Activated T-helper 1 cell treated with anti-CD3 and anti-CD28 coated beads, Interleukin-12 subunit alpha, Interleukin-12 subunit beta, Interleukin-2, Interleukin-4 antibody, amounts not matched to agents 30 ng/mL and 10 ng/mL and 1 ng/mL, durations not matched to agents 14 hours and 24 hours and 36 hours (primary cell): ENCODE measurements at regions of chr2 and their contacts with region 1.

Region 1: GRCh38 chr2:178414266-178415247 is 36.4 kb downstream of the PRKRA start:
- DNase-seq: peak; percentile 76
- H3K4me3 Mint-ChIP-seq: peak overlapping the region; percentile 87
- H3K27ac Mint-ChIP-seq: peak overlapping the region; percentile 97
- H3K4me1 Mint-ChIP-seq: peaks cover 70% of the 10 kb centered on the region
- H3K27me3 Mint-ChIP-seq: no peaks in the 10 kb centered on the region

Region 2: DNA sequence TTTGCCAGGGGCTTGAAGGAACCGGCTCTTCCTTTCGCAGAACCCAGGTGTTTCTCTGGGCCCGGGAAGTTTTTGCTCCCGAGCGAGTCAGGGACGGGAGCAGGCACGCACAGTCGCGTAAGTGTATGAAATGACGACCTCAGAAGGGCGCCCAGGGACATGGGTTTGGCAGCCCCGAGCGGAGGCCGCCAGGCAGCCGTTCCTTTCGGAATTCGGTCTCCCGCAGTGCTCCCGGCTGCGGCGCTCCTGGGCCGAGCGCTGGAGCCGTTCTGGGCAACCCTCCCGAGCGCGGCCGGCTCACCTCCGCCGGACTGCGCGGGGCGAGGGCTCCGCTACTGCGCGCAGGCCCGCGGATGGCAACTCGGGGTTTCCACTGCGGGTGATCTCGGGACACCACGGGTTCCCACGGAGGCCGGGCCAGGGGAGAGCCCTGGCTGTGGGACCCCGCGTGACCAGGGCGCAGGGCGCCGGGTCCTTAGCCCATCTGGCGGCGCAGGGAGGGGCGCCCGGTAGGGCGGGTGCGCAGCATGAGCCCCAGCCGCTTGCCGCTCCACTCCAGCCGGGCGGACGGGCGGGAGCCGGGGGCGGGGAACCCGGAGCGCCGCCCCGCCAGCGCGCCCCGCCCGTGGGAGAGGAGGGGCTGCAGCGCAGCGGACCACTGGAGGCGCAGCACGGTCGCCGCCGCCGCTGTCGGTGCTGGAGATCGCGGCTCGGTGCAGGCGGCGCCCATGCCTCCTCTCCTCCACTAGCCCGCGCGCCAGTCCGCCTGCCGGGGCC is 220.5 kb before region 1 on chr2 and contains the start of gene OSBPL6:
- intact Hi-C with region 1: loop called (anchors 2 kb)
- DNase-seq: peak; percentile 75
- H3K4me3 Mint-ChIP-seq: peak within 1 kb of the TSS; percentile 80
- H3K27ac Mint-ChIP-seq: no peak within 1 kb of the TSS
- H3K4me1 Mint-ChIP-seq: peaks cover 11% of the 10 kb centered on the region
- H3K27me3 Mint-ChIP-seq: peaks cover 57% of the 10 kb centered on the region
- total RNA-seq, gene OSBPL6: 1.5 and 1.9 TPM in 2 replicates

Region 3: DNA sequence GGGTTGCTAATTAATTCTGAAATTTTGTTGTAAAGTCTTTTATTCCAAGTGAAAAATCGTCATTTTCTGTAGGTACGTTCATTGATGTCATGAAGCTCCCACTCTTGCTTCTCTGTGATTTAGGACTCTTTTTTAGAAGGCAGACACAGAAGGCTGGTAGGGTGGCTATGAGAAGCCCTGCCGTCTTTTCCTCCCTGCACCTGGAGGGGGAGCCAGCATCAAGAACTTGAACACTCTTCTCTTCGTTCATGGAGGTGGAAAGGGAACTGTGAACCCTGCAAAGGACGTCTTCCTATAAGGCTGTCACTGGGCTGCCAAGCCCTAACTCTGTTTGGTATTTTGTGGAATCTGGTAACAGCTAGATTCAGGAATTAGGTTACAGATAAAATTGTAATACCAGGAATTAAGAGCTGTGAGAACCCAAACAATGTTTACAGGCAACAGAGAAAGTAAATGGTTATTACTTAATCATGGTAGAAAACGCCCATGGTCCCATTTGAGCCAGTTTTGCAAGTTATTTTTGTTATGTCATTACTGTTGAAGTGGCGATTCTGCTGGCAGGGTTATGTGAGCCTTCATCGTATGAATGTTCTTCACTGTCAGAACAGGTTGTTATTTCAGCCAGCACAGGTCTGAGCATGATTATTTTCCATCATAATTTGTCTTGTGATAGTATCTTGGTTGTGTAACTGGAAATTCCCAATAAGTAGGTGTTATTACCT is 108.0 kb before region 1 on chr2:
- intact Hi-C with region 1: loop called (anchors 1 kb)
- DNase-seq: peak; percentile 35
- H3K4me3 Mint-ChIP-seq: no peak overlapping the region
- H3K27ac Mint-ChIP-seq: no peak overlapping the region
- H3K4me1 Mint-ChIP-seq: no peaks in the 10 kb centered on the region
- H3K27me3 Mint-ChIP-seq: peaks cover 14% of the 10 kb centered on the region

Region 4: DNA sequence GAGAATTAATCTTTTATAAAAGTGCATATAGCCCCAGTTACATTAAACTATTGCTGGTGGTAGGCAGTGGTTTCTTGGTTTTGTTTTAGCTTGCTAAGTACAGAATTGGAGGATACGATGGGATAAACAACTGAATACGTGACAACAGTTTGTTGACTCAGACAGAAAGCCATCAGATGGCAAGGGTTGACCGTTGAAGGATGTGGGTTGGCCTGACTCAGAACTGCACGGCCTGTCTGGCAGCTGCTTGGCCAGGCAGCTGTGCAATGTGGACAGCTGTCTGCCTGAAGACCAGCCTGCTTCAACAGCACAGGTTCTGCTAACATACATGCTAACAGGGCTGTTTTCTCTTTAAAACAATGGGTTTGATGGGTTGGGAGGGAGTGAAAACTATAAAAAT is 10.2 kb before region 1 on chr2:
- intact Hi-C with region 1: loop called (anchors 1 kb)
- DNase-seq: peak; percentile 47
- H3K4me3 Mint-ChIP-seq: peak overlapping the region; percentile 63
- H3K27ac Mint-ChIP-seq: peak overlapping the region; percentile 69
- H3K4me1 Mint-ChIP-seq: peaks cover 41% of the 10 kb centered on the region
- H3K27me3 Mint-ChIP-seq: peaks cover 2% of the 10 kb centered on the region

Region 5: GRCh38 chr2:178522950-178523595 is 108.5 kb after region 1 on chr2:
- intact Hi-C with region 1: loop called (anchors 5 kb)
- DNase-seq: peak; percentile 80
- H3K4me3 Mint-ChIP-seq: peak overlapping the region; percentile 99
- H3K27ac Mint-ChIP-seq: peak overlapping the region; percentile 92
- H3K4me1 Mint-ChIP-seq: peaks cover 42% of the 10 kb centered on the region
- H3K27me3 Mint-ChIP-seq: no peaks in the 10 kb centered on the region

Region 6: GRCh38 chr2:179005976-179006375 is 591.4 kb after region 1 on chr2:
- intact Hi-C with region 1: no loop called
- DNase-seq: no peak
- H3K4me3 Mint-ChIP-seq: no peak overlapping the region
- H3K27ac Mint-ChIP-seq: no peak overlapping the region
- H3K4me1 Mint-ChIP-seq: no peaks in the 10 kb centered on the region
- H3K27me3 Mint-ChIP-seq: no peaks in the 10 kb centered on the region